Stomach (tissue), 19 donors: ENCODE measurements at regions of chr12 and their contacts with region 1.

Region 1: GRCh38 chr12:70719672-70720420 is 82.6 kb upstream of the PTPRB start:
- DNase-seq: peak in 1 of 2 donors; percentile 72
- H3K4me3 ChIP-seq: peak overlapping the region in 1 of 4 donors; percentile 14
- H3K27ac ChIP-seq: peak overlapping the region in 3 of 5 donors; percentile 8 to 15 (median 13)
- H3K4me1 ChIP-seq: peaks cover 0 to 10% (median 0%) of the 10 kb centered on the region in 4 donors
- H3K27me3 ChIP-seq: peaks cover 0 to 18% (median 0%) of the 10 kb centered on the region in 3 donors
- CTCF ChIP-seq: peak in 5 of 7 experiments; percentile 39 to 77 (median 66)
- EP300 ChIP-seq: no peak
- POLR2A ChIP-seq: no peak

Region 2: GRCh38 chr12:70590051-70590450 is 129.8 kb before region 1 on chr12:
- intact Hi-C with region 1: loop called (anchors 5 kb)
- DNase-seq: peak; percentile 77 to 88
- H3K4me3 ChIP-seq: no peak overlapping the region
- H3K27ac ChIP-seq: no peak overlapping the region
- H3K4me1 ChIP-seq: no peaks in the 10 kb centered on the region
- H3K27me3 ChIP-seq: peaks cover 0 to 10% (median 0%) of the 10 kb centered on the region in 3 donors
- CTCF ChIP-seq: peak in 5 of 7 experiments; percentile 72 to 79 (median 78)
- EP300 ChIP-seq: no peak
- POLR2A ChIP-seq: no peak

Region 3: DNA sequence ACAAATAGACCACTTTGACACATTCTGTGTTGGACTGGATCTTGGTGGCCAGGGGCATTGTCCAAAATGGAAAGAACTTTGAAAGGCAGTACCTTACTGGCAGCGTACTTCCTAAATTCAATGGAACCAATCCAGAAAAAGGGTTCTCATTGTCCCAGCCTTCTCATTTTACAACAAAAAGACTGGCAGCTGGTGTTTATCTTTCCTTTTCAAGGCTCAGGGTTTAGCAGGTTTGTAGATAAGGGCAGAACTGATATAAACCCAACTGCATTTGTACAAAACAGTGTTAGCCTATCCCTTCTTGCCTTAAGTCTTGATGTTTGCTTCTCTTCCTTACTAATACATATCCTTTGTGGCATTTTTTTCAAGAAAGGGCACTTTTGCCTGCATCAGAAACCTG is 952.0 kb after region 1 on chr12:
- intact Hi-C with region 1: no loop called
- DNase-seq: peak in 1 of 2 donors; percentile 34
- H3K4me3 ChIP-seq: no peak overlapping the region
- H3K27ac ChIP-seq: peak overlapping the region in 3 of 5 donors; percentile 44 to 50 (median 49)
- H3K4me1 ChIP-seq: peaks cover 0 to 18% (median 3%) of the 10 kb centered on the region in 4 donors
- H3K27me3 ChIP-seq: no peaks in the 10 kb centered on the region
- CTCF ChIP-seq: no peak
- EP300 ChIP-seq: no peak
- POLR2A ChIP-seq: no peak